Calu3 (cell line): ENCODE measurements at regions of chr21 and their contacts with region 1.

Region 1: DNA sequence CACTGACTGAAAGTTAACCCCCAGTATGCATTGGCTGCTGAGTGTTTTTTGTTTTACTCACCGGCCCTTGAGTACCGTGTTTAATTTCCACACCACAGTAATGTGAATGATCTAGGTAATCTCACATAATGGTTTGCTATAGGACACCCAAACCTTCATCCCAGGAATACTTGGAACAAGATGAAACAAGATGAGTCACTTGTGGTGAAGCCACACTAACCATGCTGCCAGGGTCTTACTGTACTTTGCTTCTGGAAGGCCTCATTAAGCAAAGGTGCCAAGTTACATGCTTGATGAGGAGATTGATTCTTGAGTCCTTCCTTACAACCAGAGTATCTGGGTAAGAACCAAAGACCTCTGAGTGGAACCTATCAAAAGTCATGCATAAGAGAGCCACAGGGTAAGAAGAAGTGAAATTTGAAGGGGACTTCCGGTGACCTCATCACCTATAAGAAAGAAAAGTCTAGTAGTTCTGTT is 163.3 kb downstream of the NRIP1 start:
- DNase-seq: peak; percentile 6
- H3K4me3 Mint-ChIP-seq: no peak overlapping the region
- H3K27ac Mint-ChIP-seq: no peak overlapping the region
- H3K4me1 Mint-ChIP-seq: peaks cover 29% of the 10 kb centered on the region
- H3K27me3 Mint-ChIP-seq: no peaks in the 10 kb centered on the region
- CTCF ChIP-seq: no peak

Region 2: GRCh38 chr21:14942801-14943490 is 41.4 kb after region 1 on chr21:
- CTCF ChIA-PET with region 1: no interaction called
- intact Hi-C with region 1: loop called (anchors 5 kb)
- DNase-seq: no peak
- H3K4me3 Mint-ChIP-seq: no peak overlapping the region
- H3K27ac Mint-ChIP-seq: peak overlapping the region; percentile 33
- H3K4me1 Mint-ChIP-seq: peaks cover 32% of the 10 kb centered on the region
- H3K27me3 Mint-ChIP-seq: no peaks in the 10 kb centered on the region
- CTCF ChIP-seq: no peak